ENCODE measurements at regions of chr9 and their contacts with region 1.

Region 1: GRCh38 chr9:129823935-129824601 is at the start of gene TOR1A:
- DNase-seq: peak; percentile 92
- ATAC-seq: peak; percentile 95
- H3K4me3 ChIP-seq: peak within 1 kb of the TSS; percentile 78 to 90 (median 83)
- H3K27ac ChIP-seq: peak within 1 kb of the TSS; percentile 72
- H3K4me1 ChIP-seq: peaks cover 7% of the 10 kb centered on the region
- H3K27me3 ChIP-seq: no peaks in the 10 kb centered on the region
- CTCF ChIP-seq: 0 out of 2 replicates have a peak, but pooled peaks have one; percentile 2
- EP300 ChIP-seq: no peak
- POLR2A ChIP-seq: peak; percentile 77 to 93
- RAD21 ChIP-seq: peak; percentile 36
- total RNA-seq, gene TOR1A: 18.6 and 31.6 TPM in 2 replicates

Region 2: GRCh38 chr9:129737479-129738274 is 86.4 kb before region 1 on chr9:
- CTCF ChIA-PET with region 1: no interaction called
- POLR2A ChIA-PET with region 1: no interaction called
- in situ Hi-C with region 1: no loop called
- intact Hi-C with region 1: no loop called
- DNase-seq: peak; percentile 45
- ATAC-seq: peak; percentile 85
- H3K4me3 ChIP-seq: peak overlapping the region; percentile 39 to 67 (median 65); a peak in 4 of 6 replicates
- H3K27ac ChIP-seq: no peak overlapping the region
- H3K4me1 ChIP-seq: 0 out of 2 replicates have a peak, but pooled peaks cover 5% of the 10 kb centered on the region
- H3K27me3 ChIP-seq: peaks cover 7 to 51% of the 10 kb centered on the region in 2 experiments; a peak in 3 of 5 replicates
- CTCF ChIP-seq: peak; percentile 96
- EP300 ChIP-seq: no peak
- POLR2A ChIP-seq: no peak
- RAD21 ChIP-seq: peak; percentile 92

Region 3: DNA sequence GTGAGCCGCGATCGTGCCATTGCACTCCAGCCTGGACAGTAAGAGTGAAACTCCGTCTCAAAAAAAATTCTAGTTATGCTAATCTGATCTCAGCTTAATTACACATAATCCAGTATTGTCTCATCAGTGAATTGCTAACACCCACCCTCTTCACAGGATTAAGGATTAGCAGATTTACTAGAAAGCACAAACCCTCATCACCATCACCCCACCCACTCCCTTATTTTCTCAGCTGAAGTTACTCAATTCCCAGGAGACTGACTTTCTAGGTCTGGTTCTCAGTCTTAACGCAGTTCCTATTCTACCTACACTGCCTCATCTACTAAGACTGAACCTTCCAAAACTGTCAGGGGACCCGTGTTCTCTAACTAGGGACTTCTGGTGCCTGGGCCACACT is 12.1 kb before region 1 on chr9:
- CTCF ChIA-PET with region 1: no interaction called
- POLR2A ChIA-PET with region 1: interaction called, 11 read pairs
- in situ Hi-C with region 1: no loop called
- intact Hi-C with region 1: no loop called
- DNase-seq: no peak
- ATAC-seq: no peak
- H3K4me3 ChIP-seq: no peak overlapping the region
- H3K27ac ChIP-seq: no peak overlapping the region
- H3K4me1 ChIP-seq: peaks cover 23% of the 10 kb centered on the region
- H3K27me3 ChIP-seq: no peaks in the 10 kb centered on the region
- CTCF ChIP-seq: no peak
- EP300 ChIP-seq: no peak
- POLR2A ChIP-seq: no peak
- RAD21 ChIP-seq: no peak

Region 4: GRCh38 chr9:129850821-129851540 is 26.9 kb after region 1 on chr9:
- CTCF ChIA-PET with region 1: no interaction called
- POLR2A ChIA-PET with region 1: no interaction called
- in situ Hi-C with region 1: no loop called
- intact Hi-C with region 1: no loop called
- DNase-seq: no peak
- ATAC-seq: no peak
- H3K4me3 ChIP-seq: no peak overlapping the region
- H3K27ac ChIP-seq: no peak overlapping the region
- H3K4me1 ChIP-seq: no peaks in the 10 kb centered on the region
- H3K27me3 ChIP-seq: no peaks in the 10 kb centered on the region
- CTCF ChIP-seq: no peak
- EP300 ChIP-seq: no peak
- POLR2A ChIP-seq: no peak
- RAD21 ChIP-seq: no peak

Measured in HepG2 (cell line).